ENCODE measurements at regions of chrX and their contacts with region 1.

Region 1: DNA sequence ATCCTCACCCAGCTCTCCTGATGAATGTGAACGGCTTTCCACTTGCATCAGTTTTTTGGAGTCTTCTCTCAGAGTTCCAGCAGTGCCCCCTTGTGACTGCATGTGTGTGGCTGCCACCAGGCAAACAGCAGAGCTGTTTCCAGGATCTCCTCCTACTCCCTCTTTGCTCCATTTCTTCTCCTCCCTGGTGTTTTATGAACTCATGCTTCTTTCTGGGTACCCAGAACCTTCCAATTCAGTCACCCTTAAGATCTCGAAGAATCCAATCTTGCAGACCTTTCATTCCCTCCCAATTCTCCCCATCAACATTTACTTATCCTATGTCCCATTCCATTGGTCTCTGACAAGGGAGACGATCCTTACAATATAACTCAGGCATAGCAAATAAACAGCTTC is 6.8 kb upstream of the TCEANC start:
- DNase-seq: no peak
- H3K4me3 ChIP-seq: no peak overlapping the region
- H3K27ac ChIP-seq: no peak overlapping the region
- H3K4me1 ChIP-seq: peaks cover 0 to 20% (median 0%) of the 10 kb centered on the region in 4 donors
- H3K27me3 ChIP-seq: no peaks in the 10 kb centered on the region
- CTCF ChIP-seq: peak; percentile 47 to 64 (median 51)
- EP300 ChIP-seq: no peak
- POLR2A ChIP-seq: no peak

Region 2: DNA sequence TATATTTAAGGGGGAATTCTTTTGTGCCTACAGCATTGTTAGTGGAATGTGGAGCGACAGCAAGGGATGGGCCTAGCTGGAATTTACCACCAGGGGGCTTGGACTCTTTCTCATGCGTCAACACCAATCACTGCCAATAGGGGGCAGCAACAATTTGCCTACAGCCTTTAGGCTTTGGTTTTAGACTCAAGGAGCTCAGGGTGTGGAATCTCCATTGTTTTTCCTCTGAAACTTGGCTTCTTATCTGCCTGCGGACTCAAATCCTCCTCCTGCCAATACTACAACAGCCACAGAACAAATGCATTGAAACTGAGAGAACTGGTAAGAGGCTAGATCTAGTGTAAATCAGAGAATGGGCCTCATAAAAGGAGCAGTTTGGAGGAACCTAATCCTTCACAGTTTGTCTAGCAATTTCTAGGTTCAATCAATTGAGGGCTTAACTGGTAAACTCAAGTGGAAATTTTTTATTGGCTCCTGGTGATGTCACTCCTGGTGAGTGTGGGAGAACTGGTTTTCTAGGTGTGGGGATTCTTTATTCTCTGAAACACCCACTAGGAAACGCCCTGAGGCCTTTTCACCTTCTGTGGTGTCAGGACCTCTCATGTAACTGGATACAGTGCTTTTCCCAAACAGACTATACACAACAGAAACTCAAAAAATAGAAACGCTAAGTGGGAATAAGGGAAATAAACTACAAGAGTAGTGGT is 699.2 kb before region 1 on chrX:
- intact Hi-C with region 1: loop called (anchors 10 kb)
- DNase-seq: no peak
- H3K4me3 ChIP-seq: no peak overlapping the region
- H3K27ac ChIP-seq: peak overlapping the region in 3 of 4 donors; percentile 15 to 44 (median 40)
- H3K4me1 ChIP-seq: peaks cover 14 to 31% (median 17%) of the 10 kb centered on the region in 4 donors
- H3K27me3 ChIP-seq: no peaks in the 10 kb centered on the region
- CTCF ChIP-seq: peak; percentile 66 to 76 (median 72)
- EP300 ChIP-seq: no peak
- POLR2A ChIP-seq: no peak

Measured in esophagus muscularis mucosa (tissue), 4 donors.